KBM-7 (cell line): ENCODE measurements at regions of chr15 and their contacts with region 1.

Region 1: DNA sequence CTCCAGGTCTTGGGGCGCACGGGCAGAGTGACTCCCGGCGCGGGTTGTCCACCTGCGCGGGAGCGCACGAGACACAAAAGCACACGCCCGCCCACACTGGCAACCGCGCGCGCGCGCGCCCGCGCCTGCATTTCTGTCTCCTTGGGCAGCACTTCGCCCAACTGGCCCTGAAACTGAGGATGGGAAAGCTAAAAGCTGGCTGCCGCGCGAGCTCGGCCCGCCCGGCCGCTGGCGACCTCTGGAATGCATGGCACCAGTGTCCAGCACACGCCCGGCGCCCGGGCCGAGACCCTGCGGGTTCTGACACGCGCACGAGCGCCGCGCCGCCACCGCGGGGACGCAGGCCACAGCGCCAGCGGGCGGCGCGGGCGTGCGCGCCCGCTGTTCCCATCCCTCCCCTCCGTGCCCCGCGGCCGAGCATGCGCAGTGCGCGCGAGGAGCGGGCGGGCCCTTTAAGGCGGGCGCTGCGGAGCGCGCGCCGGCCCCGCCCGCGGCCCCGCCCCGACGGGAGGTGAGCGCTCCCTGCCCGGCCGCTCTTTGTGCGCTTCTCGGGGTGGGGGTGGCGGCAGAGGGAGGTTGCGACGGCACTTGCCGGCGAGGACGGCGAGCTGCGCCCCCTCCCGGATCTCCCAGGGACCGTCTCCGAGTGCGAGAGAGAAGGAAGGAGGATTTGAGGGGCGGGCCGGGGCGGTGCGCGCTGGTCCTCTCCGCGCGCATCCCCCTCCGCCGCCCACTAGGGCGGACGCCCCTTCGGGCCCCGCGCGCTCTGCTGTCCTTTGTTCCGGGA is 1.0 kb upstream of the MEX3B start:
- DNase-seq: peak; percentile 100

Region 2: DNA sequence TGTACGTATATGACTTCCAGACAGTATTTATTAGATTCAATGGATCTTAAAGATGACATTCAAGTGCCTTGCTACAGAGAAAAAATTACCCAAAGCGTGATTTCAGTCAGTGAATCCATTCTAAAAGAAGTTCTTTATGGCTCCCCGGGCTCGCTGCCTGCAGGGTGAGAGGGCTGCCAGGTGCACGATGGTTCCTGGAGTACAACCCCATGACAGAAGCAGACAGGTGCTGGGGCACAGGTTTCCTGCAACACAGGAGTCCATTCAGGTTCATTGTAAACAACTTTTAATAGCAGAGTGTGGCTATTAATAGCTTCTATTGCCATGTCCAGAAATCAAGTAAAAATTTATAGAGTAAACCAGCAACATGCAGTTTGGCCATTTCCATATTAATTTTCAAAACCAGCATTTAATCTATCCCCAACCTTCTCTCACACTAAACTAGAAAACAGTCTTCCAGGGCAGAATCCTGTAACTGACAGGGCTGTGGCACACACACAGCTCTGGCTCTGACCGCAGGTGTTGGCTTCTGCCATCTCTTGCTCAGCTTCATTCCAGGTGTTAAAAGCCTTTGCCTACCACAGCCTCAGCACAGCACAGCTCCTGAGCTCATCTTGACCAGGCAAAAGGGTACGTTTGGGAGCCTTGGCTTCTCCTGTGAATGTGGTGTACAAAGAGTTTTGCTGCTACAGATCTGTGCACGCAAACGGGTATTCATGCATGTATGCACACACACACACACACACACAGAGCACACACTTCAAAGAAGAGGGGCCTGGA is 186.9 kb before region 1 on chr15:
- in situ Hi-C with region 1: no loop called
- DNase-seq: no peak

Region 3: DNA sequence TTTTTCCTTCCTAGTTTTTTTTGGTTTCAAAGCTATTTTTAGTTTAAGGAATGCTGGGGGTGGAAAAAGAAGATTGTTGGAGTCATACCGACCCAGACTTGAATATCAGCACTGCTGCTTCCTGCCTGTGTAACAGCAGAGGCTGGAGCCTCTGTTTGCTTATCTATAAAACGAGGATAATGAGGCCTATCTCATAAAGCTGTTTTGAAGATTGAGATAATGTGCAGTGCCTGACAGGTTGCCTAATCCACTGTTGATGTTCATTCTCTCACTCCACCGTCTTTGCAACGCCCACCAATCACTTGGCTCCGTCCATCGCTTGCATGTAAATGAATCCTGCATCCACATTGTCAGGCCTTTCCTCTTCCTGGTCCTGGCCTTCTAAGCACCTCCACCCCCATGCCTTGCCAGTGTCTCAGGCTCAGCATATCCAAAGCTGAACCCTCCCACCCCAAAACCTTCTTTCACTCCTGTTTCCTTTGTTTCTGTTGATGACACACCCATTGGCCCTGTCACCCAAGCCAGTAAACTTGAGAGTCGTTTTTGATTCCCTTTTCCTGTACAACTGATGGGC is 95.9 kb before region 1 on chr15:
- in situ Hi-C with region 1: loop called (anchors 10 kb)
- DNase-seq: peak; percentile 50

Region 4: DNA sequence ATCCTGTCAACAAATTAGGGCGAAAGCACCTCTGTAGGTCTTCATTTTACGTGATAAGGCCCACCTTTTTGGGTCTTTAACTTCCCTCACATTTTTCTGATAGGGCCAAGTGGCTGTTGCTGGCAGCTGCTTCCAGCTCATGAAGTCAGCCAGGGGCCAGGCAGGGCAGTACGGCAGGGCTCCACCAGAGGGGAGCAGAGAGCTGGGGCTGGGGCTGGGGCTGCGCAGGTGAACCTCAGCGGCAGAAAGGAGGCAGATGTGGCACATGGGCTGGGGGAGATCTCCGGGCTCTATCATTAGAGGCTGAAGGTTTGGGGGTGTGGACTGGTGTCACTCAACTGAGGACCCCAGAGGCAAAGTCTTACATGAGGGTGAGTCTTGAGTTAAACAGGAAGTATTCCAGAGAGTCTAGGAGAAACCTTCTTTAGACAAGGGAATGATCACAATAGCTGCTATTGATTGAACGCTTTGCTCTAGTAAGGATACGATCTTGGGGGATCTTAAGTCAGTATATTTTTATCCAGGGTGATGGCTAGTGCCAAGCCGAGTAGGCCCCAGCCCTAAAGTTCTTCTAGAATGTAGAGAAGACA is 61.7 kb after region 1 on chr15:
- in situ Hi-C with region 1: loop called (anchors 10 kb)
- DNase-seq: peak; percentile 91